ENCODE measurements at regions of chr4 and their contacts with region 1.

Region 1: DNA sequence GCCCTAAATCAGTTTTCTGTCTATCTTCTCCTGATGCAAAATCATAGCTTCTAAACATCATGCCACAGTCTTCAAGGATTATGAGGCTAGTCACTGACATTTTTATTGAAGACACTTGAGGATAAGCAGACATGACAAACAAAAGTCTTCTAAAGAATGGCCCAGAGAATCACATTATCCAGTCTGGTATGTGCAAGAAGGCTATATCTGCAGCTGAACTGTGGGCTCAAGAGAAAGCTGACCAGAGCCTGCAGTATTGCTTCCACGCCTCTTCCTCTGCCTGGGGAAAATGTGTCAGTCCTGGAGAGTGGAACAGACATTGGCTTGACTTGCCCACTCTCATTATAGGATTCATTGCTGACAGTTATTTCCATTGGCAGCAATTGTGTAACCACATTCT is 553.5 kb downstream of the SPOCK3 start:
- DNase-seq: no peak
- ATAC-seq: no peak

Region 2: DNA sequence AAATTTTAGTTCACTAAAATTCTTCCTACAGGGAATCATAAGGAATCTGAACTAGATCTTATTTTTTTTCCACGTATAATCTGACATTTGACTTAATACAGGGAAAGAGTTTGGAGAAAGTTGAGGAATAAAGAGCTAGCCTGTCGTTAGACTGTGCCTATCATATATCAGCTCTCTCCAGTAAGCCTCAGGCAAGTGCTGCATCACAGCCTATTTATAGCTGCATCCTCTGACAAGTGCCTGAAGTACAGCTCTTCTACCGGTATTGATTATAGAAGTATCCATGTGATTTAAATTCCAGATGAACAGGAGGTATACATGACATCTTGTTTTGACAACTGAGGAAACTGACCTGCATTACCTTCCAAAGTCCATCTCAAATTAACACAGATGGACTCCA is 558.9 kb before region 1 on chr4:
- intact Hi-C with region 1: loop called in 1 of 2 experiments (anchors 5 kb)
- DNase-seq: no peak
- ATAC-seq: no peak

Measured in left colon (tissue), 2 donors.